Activated CD4-positive, alpha-beta T cell treated with anti-CD3 and anti-CD28 coated beads for 36 hours (primary cell): ENCODE measurements at regions of chr1 and their contacts with region 1.

Region 1: DNA sequence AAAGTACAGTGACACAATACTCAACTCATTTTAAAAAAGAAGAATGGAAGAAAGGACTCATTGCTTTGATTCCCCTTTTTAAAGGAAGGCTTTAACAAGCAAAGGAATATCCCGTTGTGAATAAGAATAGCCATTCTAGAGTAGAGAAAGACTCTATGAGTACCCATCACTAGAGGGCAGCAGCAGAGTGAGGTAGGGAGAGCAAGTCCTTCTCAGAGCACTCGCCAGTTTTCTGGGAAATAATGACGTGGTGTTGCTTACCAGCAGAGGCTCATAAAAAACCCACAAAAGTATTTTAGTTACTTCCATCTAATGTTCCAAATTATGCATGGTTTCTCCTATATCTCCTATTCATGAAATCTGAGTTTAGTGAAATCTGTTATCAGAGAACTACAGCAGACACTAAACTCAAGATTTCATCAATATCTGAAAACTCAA is 74.6 kb downstream of the USP24 start:
- DNase-seq: peak; percentile 84
- ATAC-seq: peak; percentile 96
- H3K4me3 Mint-ChIP-seq: no peak overlapping the region
- H3K27ac Mint-ChIP-seq: peak overlapping the region; percentile 67
- H3K4me1 Mint-ChIP-seq: peaks cover 15% of the 10 kb centered on the region
- H3K27me3 Mint-ChIP-seq: no peaks in the 10 kb centered on the region

Region 2: GRCh38 chr1:55120538-55120937 is 20.0 kb before region 1 on chr1:
- CTCF ChIA-PET with region 1: interaction called, 10 read pairs
- POLR2A ChIA-PET with region 1: no interaction called
- intact Hi-C with region 1: no loop called
- DNase-seq: no peak
- ATAC-seq: no peak
- H3K4me3 Mint-ChIP-seq: no peak overlapping the region
- H3K27ac Mint-ChIP-seq: no peak overlapping the region
- H3K4me1 Mint-ChIP-seq: peaks cover 23% of the 10 kb centered on the region
- H3K27me3 Mint-ChIP-seq: no peaks in the 10 kb centered on the region

Region 3: DNA sequence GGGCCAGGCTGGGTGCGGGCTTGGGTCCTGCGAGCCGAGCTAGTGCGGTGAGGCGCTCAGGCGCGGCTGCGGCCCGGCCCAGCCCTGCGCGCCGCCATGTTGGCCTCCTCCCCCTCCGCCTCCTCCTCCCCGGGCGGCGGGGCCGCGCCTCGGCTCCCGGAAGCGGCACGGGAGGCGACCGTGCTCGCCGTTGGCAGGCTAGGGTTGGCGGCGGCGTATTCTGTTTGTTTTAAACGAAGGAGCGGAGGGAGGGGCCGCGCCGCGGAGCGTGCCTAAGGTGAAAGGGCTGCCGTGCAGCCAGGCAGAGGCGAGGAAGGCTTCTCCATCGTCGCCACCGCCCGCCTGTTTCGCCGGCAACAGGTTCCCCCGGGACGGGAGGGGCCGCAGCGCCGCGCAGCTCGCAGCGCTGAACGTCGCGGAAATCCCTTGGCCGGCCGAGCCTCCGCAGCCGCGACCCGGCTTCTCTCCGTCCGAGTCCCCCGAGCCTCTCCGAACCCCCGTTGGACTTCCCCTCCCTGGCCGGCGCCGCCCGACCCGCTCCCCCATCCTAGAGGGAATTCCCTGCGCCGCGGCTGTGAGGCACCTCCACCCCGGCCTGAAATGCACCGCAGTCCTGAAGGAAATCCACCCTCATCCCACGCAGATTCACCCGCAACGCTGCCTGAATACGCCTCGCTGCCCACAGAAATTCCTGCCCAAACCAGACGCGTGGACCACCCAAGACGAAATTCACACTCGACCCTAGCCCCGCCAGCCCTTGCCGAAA is 74.9 kb after region 1 on chr1 and contains the start of gene USP24:
- CTCF ChIA-PET with region 1: interaction called, 4 read pairs
- POLR2A ChIA-PET with region 1: no interaction called
- intact Hi-C with region 1: loop called (anchors 2 kb)
- DNase-seq: peak; percentile 90
- ATAC-seq: peak; percentile 84
- H3K4me3 Mint-ChIP-seq: peak within 1 kb of the TSS; percentile 97
- H3K27ac Mint-ChIP-seq: peak within 1 kb of the TSS; percentile 100
- H3K4me1 Mint-ChIP-seq: peaks cover 55% of the 10 kb centered on the region
- H3K27me3 Mint-ChIP-seq: no peaks in the 10 kb centered on the region
- total RNA-seq, gene USP24: 37.0 to 39.7 TPM

Region 4: GRCh38 chr1:55337801-55338447 is 197.4 kb after region 1 on chr1:
- CTCF ChIA-PET with region 1: interaction called, 8 read pairs
- POLR2A ChIA-PET with region 1: no interaction called
- intact Hi-C with region 1: loop called (anchors 1 kb)
- DNase-seq: peak; percentile 31
- ATAC-seq: peak; percentile 75
- H3K4me3 Mint-ChIP-seq: no peak overlapping the region
- H3K27ac Mint-ChIP-seq: no peak overlapping the region
- H3K4me1 Mint-ChIP-seq: no peaks in the 10 kb centered on the region
- H3K27me3 Mint-ChIP-seq: no peaks in the 10 kb centered on the region

Region 5: DNA sequence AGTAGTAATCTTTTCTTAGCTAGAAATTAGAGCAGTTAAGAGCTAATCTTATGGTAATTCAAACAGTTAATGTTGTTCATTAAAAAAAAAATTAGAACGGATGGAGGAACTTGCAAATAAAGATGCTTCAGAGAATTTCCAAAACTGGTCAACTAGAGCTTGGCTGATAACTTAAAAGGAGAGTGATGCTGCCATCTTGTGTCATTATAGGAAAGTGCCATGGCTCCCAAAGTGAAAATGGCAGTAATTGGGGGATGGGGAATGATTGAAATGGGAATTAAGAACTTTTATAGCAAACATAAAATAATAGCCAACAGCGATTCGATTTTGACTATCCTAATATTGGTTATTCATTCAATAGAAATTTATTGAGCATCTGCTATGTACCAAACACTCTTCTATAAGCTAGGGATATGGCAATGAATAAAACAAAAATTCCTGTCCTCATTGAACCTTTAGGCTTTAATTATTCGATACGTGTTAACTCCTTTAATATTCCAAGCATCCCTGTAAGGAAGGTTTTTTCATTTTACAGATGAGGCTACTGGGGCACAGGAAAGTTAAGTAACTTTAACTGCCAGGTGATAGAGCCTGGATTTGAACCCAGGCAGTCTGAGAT is 1444.5 kb after region 1 on chr1:
- CTCF ChIA-PET with region 1: no interaction called
- POLR2A ChIA-PET with region 1: no interaction called
- intact Hi-C with region 1: loop called in 1 of 2 experiments (anchors 10 kb)
- DNase-seq: no peak
- ATAC-seq: no peak
- H3K4me3 Mint-ChIP-seq: no peak overlapping the region
- H3K27ac Mint-ChIP-seq: no peak overlapping the region
- H3K4me1 Mint-ChIP-seq: peaks cover under 1% of the 10 kb centered on the region
- H3K27me3 Mint-ChIP-seq: peaks cover 10% of the 10 kb centered on the region